Panc1 (cell line): ENCODE measurements at regions of chr4 and their contacts with region 1.

Region 1: GRCh38 chr4:151604238-151604637 is 156.6 kb downstream of the GATB start:
- DNase-seq: no peak
- ATAC-seq: no peak
- H3K4me3 ChIP-seq: no peak overlapping the region
- H3K27ac ChIP-seq: no peak overlapping the region
- H3K4me1 ChIP-seq: no peaks in the 10 kb centered on the region
- H3K27me3 ChIP-seq: no peaks in the 10 kb centered on the region
- CTCF ChIP-seq: peak; percentile 54

Region 2: DNA sequence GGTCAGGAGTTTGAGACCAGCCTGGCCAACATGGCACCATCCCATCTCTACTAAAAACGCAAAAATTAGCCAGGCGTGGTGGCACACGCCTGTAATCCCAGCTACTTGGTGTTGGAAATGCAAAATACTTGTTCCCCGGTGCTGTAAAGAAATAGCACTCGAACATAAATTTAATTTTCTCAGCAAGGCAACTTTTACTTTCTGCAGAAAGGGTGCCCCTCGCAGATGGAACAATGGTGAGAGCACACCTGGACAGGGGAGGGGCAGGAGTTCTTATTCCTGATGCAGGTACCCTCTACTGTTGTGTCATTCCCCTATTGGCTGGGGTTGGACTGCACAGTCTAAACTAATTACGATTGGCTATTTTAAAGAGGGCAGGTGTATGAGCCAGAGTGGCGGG is 55.5 kb before region 1 on chr4:
- CTCF ChIA-PET with region 1: no interaction called
- POLR2A ChIA-PET with region 1: interaction called, 14 read pairs
- in situ Hi-C with region 1: no loop called
- intact Hi-C with region 1: no loop called
- DNase-seq: no peak
- ATAC-seq: no peak
- H3K4me3 ChIP-seq: no peak overlapping the region
- H3K27ac ChIP-seq: no peak overlapping the region
- H3K4me1 ChIP-seq: no peaks in the 10 kb centered on the region
- H3K27me3 ChIP-seq: no peaks in the 10 kb centered on the region; the same call in 1 of the 2 replicates
- CTCF ChIP-seq: no peak